ENCODE measurements at regions of chr14 and their contacts with region 1.

Region 1: DNA sequence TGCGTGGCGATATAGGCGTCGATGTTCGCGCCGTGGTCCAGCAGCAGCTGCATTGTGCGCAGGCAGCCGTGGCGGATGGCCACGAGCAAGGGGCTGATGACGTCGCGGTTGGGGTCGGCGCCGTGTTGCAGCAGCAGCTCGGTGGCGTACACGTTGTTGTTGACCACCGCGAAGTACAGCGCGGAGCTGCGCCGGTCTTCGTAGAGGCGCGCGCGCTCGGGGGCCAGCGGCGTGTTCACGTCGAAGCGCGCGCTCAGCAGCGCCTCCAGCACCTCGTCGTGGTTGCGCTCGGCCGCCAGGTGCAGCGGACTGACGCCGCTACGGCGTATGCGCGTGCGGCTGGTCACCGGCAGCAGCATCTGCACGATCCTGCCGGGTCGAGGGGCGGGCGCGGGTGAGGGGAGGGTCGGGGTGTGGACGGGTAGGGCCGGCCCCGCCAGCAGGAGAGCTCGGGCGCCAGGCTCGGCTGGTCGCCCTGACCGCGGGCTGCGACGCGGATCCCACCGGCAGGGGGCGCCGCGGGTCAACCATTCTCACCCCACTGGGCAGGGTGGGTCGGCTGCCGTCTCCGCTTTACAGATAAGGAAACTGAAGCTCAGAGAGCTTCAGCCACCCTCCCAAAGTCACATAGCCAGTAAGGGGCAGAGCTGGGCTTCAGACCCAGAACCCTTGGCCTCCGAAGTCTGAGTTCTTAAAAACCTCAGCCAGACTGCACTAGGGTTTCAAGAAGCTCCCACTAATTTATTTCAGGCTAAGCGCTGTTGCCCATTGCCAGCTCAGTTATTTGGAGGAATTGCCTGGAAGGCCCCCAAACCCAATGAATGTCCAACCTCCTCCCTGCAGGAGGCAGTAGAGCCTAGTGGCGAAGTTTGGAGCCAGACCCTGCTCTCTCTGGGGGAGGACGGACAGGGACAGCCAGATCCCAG is 12.4 kb downstream of the FAM181A start:
- DNase-seq: peak; percentile 85 to 98 (median 90)
- ATAC-seq: peak; percentile 87
- H3K4me3 ChIP-seq: peak overlapping the region; percentile 29 to 33
- H3K4me3 Mint-ChIP-seq: peak overlapping the region; percentile 70
- H3K27ac ChIP-seq: no peak overlapping the region
- H3K27ac Mint-ChIP-seq: no peak overlapping the region
- H3K4me1 ChIP-seq: peaks cover 10% of the 10 kb centered on the region
- H3K4me1 Mint-ChIP-seq: peaks cover 6% of the 10 kb centered on the region
- H3K27me3 ChIP-seq: no peaks in the 10 kb centered on the region
- H3K27me3 Mint-ChIP-seq: peaks cover 10% of the 10 kb centered on the region
- CTCF ChIP-seq: peak; percentile 99

Region 2: GRCh38 chr14:93959239-93960107 is 19.9 kb after region 1 on chr14:
- CTCF ChIA-PET with region 1: interaction called, 83 read pairs
- POLR2A ChIA-PET with region 1: interaction called, 13 read pairs
- intact Hi-C with region 1: loop called in 1 of 2 experiments (anchors 1 kb)
- DNase-seq: peak; percentile 78 to 97 (median 91)
- ATAC-seq: peak; percentile 73
- H3K4me3 ChIP-seq: peak overlapping the region in 1 of 2 experiments; percentile 5
- H3K4me3 Mint-ChIP-seq: peak overlapping the region; percentile 53
- H3K27ac ChIP-seq: peak overlapping the region; percentile 47 to 89
- H3K27ac Mint-ChIP-seq: peak overlapping the region; percentile 97
- H3K4me1 ChIP-seq: peaks cover 97% of the 10 kb centered on the region
- H3K4me1 Mint-ChIP-seq: peaks cover 92% of the 10 kb centered on the region
- H3K27me3 ChIP-seq: no peaks in the 10 kb centered on the region
- H3K27me3 Mint-ChIP-seq: no peaks in the 10 kb centered on the region
- CTCF ChIP-seq: no peak

Region 3: GRCh38 chr14:93970549-93970946 is 31.0 kb after region 1 on chr14:
- CTCF ChIA-PET with region 1: interaction called, 504 read pairs
- POLR2A ChIA-PET with region 1: interaction called, 40 read pairs
- intact Hi-C with region 1: loop called (anchors 1 kb)
- DNase-seq: peak; percentile 46 to 85 (median 77)
- ATAC-seq: peak; percentile 93
- H3K4me3 ChIP-seq: peak overlapping the region; percentile 63 to 64
- H3K4me3 Mint-ChIP-seq: peak overlapping the region; percentile 92
- H3K27ac ChIP-seq: no peak overlapping the region
- H3K27ac Mint-ChIP-seq: peak overlapping the region; percentile 87
- H3K4me1 ChIP-seq: peaks cover 7% of the 10 kb centered on the region
- H3K4me1 Mint-ChIP-seq: peaks cover 32% of the 10 kb centered on the region
- H3K27me3 ChIP-seq: no peaks in the 10 kb centered on the region
- H3K27me3 Mint-ChIP-seq: peaks cover 2% of the 10 kb centered on the region
- CTCF ChIP-seq: peak; percentile 77

Region 4: GRCh38 chr14:94001501-94002396 is 62.2 kb after region 1 on chr14:
- CTCF ChIA-PET with region 1: interaction called, 283 read pairs
- POLR2A ChIA-PET with region 1: interaction called, 7 read pairs
- intact Hi-C with region 1: loop called (anchors 1 kb)
- DNase-seq: peak; percentile 18 to 79 (median 62)
- ATAC-seq: peak; percentile 85
- H3K4me3 ChIP-seq: no peak overlapping the region
- H3K4me3 Mint-ChIP-seq: no peak overlapping the region
- H3K27ac ChIP-seq: no peak overlapping the region
- H3K27ac Mint-ChIP-seq: no peak overlapping the region
- H3K4me1 ChIP-seq: peaks cover 6% of the 10 kb centered on the region
- H3K4me1 Mint-ChIP-seq: peaks cover 7% of the 10 kb centered on the region
- H3K27me3 ChIP-seq: peaks cover 0 to 7% of the 10 kb centered on the region in 2 experiments
- H3K27me3 Mint-ChIP-seq: peaks cover 16% of the 10 kb centered on the region
- CTCF ChIP-seq: peak; percentile 95

Region 5: DNA sequence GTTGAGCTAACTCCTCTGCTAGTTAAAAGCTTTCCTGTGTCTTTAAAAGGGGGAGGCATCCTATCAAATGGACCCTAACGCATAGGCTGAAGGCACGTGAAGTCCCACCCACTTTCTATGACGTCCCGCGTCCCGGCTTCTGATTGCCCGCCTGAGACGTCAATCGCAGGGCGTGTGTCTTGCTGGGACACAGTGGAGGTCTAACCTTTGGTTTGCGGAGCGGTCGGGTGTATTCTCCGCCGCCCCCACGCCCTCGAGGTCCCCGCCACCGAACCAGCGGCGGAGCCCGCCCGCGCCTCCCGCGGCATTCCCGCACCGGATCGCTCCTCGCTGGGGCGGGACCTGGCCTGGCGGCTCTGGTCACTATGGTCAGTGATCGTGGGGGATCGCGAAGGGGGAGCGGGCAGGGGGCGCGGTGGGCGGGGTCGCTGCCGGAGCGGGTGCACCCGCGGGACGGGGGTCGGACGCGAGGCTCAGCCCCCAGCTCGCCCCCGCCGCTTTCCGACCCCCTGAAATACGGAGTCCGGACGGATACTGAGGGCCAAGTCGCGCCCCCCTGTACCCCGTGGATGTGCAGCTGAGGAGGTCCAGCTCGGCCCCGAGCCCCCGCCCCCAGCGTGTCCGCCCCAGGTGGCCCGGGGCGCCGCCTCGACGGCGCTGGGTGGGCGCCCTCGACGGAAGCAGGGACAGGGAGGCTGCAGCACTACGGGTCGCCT is 86.8 kb after region 1 on chr14 and contains the start of gene OTUB2:
- CTCF ChIA-PET with region 1: interaction called, 17 read pairs
- POLR2A ChIA-PET with region 1: interaction called, 4 read pairs
- intact Hi-C with region 1: no loop called
- DNase-seq: peak; percentile 91 to 98 (median 95)
- ATAC-seq: peak; percentile 100
- H3K4me3 ChIP-seq: peak within 1 kb of the TSS; percentile 24 to 42
- H3K4me3 Mint-ChIP-seq: peak within 1 kb of the TSS; percentile 84
- H3K27ac ChIP-seq: no peak within 1 kb of the TSS
- H3K27ac Mint-ChIP-seq: no peak within 1 kb of the TSS
- H3K4me1 ChIP-seq: no peaks in the 10 kb centered on the region
- H3K4me1 Mint-ChIP-seq: peaks cover 25% of the 10 kb centered on the region
- H3K27me3 ChIP-seq: no peaks in the 10 kb centered on the region
- H3K27me3 Mint-ChIP-seq: peaks cover 3% of the 10 kb centered on the region
- CTCF ChIP-seq: no peak
- total RNA-seq, gene OTUB2: not detected

Region 6: DNA sequence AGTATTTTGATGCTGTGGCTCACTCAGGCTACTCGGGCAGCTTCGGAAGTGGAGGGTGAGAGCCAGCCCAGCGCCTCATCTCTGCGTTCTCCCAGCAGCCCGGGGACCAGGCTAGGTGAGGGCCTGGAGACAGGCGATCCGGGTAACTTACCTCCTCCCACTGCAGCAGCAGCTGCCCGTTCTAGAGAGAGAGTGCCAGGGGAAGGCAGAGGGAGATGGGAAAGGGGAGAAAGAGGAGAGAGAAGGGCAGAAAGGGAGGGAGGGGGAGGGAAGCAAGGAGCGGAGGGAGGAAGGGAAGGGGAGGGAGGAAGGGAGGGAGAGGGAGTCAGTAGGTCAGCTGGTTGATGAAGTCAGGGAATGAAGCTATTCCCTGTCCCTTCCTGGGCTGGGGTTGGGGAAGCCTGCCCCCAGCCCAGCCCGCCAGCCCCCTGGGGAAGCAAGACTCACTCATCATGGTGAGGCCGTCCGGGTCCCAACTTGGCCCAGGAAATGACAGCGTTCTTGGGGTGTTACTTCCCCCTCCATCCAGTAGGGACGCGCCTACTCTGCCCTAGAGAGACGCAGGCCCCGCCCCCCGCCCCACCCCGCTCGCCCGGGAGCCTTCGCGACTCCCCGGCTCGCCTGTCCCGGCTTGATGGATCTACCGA is 189.7 kb after region 1 on chr14 and contains the start of gene IFI27L2:
- CTCF ChIA-PET with region 1: interaction called, 10 read pairs
- POLR2A ChIA-PET with region 1: no interaction called
- intact Hi-C with region 1: no loop called
- DNase-seq: peak; percentile 26 to 87 (median 65)
- ATAC-seq: peak; percentile 95
- H3K4me3 ChIP-seq: peak within 1 kb of the TSS; percentile 57 to 71
- H3K4me3 Mint-ChIP-seq: peak within 1 kb of the TSS; percentile 92
- H3K27ac ChIP-seq: peak within 1 kb of the TSS in 1 of 2 experiments; percentile 64
- H3K27ac Mint-ChIP-seq: peak within 1 kb of the TSS; percentile 83
- H3K4me1 ChIP-seq: peaks cover 16% of the 10 kb centered on the region
- H3K4me1 Mint-ChIP-seq: peaks cover 17% of the 10 kb centered on the region
- H3K27me3 ChIP-seq: no peaks in the 10 kb centered on the region
- H3K27me3 Mint-ChIP-seq: no peaks in the 10 kb centered on the region
- CTCF ChIP-seq: no peak
- total RNA-seq, gene IFI27L2: 13.3 to 16.4 TPM

Region 7: DNA sequence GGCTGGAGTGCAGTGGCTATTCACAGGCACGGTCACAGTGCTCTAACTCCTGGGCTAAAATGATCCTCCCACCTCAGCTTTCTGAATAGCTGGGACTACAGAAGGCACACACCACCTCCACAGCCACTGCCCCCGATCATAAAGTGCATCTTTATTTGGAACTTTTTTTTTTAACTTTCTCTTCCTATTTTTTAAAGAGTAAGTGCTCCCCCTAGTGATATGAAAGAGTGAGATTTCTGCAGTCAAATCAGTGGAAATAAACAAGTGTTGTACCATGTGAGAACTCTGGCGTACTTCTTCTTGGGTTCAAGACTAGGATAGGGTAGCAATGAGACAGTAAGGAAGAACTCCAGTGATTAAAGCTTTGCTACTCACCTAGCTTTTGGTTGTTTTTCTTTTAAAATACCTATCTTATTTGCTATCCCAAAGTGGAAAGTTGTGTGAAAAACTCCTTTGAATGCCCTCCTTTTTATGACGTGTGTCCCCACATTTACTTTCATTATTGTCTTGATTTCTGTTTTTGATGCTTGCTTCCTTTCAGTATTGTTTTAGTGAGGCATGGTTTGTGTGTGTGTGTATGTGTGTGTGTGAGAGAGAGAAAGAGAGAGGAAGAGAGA is 241.2 kb after region 1 on chr14:
- CTCF ChIA-PET with region 1: interaction called, 10 read pairs
- POLR2A ChIA-PET with region 1: no interaction called
- intact Hi-C with region 1: loop called (anchors 1 kb)
- DNase-seq: peak in 3 of 9 experiments; percentile 32 to 76 (median 68)
- ATAC-seq: peak; percentile 86
- H3K4me3 ChIP-seq: no peak overlapping the region
- H3K4me3 Mint-ChIP-seq: peak overlapping the region; percentile 49
- H3K27ac ChIP-seq: no peak overlapping the region
- H3K27ac Mint-ChIP-seq: peak overlapping the region; percentile 63
- H3K4me1 ChIP-seq: no peaks in the 10 kb centered on the region
- H3K4me1 Mint-ChIP-seq: peaks cover 9% of the 10 kb centered on the region
- H3K27me3 ChIP-seq: peaks cover 0 to 2% of the 10 kb centered on the region in 2 experiments
- H3K27me3 Mint-ChIP-seq: peaks cover 15% of the 10 kb centered on the region
- CTCF ChIP-seq: peak; percentile 81

Region 8: GRCh38 chr14:94992046-94992445 is 1052.5 kb after region 1 on chr14:
- CTCF ChIA-PET with region 1: no interaction called
- POLR2A ChIA-PET with region 1: no interaction called
- intact Hi-C with region 1: no loop called
- DNase-seq: no peak
- ATAC-seq: no peak
- H3K4me3 ChIP-seq: no peak overlapping the region
- H3K4me3 Mint-ChIP-seq: no peak overlapping the region
- H3K27ac ChIP-seq: no peak overlapping the region
- H3K27ac Mint-ChIP-seq: no peak overlapping the region
- H3K4me1 ChIP-seq: no peaks in the 10 kb centered on the region
- H3K4me1 Mint-ChIP-seq: no peaks in the 10 kb centered on the region
- H3K27me3 ChIP-seq: no peaks in the 10 kb centered on the region
- H3K27me3 Mint-ChIP-seq: peaks cover 33% of the 10 kb centered on the region
- CTCF ChIP-seq: no peak